PC-9 (cell line): ENCODE measurements at regions of chr5 and their contacts with region 1.

Region 1: GRCh38 chr5:1437226-1437851 is 7.9 kb downstream of the SLC6A3 start:
- DNase-seq: peak in 1 of 2 experiments; percentile 58
- H3K4me3 ChIP-seq: no peak overlapping the region
- H3K27ac ChIP-seq: no peak overlapping the region
- H3K4me1 ChIP-seq: no peaks in the 10 kb centered on the region
- H3K27me3 ChIP-seq: peaks cover 97% of the 10 kb centered on the region
- CTCF ChIP-seq: no peak

Region 2: GRCh38 chr5:1385395-1386273 is 51.7 kb before region 1 on chr5:
- CTCF ChIA-PET with region 1: no interaction called
- POLR2A ChIA-PET with region 1: no interaction called
- intact Hi-C with region 1: loop called (anchors 2 kb)
- DNase-seq: peak in 1 of 2 experiments; percentile 94
- H3K4me3 ChIP-seq: peak overlapping the region; percentile 68
- H3K27ac ChIP-seq: no peak overlapping the region
- H3K4me1 ChIP-seq: 0 out of 2 replicates have a peak, but pooled peaks cover 10% of the 10 kb centered on the region
- H3K27me3 ChIP-seq: peaks cover 94% of the 10 kb centered on the region
- CTCF ChIP-seq: no peak